ENCODE measurements at regions of chr1 and their contacts with region 1.

Region 1: DNA sequence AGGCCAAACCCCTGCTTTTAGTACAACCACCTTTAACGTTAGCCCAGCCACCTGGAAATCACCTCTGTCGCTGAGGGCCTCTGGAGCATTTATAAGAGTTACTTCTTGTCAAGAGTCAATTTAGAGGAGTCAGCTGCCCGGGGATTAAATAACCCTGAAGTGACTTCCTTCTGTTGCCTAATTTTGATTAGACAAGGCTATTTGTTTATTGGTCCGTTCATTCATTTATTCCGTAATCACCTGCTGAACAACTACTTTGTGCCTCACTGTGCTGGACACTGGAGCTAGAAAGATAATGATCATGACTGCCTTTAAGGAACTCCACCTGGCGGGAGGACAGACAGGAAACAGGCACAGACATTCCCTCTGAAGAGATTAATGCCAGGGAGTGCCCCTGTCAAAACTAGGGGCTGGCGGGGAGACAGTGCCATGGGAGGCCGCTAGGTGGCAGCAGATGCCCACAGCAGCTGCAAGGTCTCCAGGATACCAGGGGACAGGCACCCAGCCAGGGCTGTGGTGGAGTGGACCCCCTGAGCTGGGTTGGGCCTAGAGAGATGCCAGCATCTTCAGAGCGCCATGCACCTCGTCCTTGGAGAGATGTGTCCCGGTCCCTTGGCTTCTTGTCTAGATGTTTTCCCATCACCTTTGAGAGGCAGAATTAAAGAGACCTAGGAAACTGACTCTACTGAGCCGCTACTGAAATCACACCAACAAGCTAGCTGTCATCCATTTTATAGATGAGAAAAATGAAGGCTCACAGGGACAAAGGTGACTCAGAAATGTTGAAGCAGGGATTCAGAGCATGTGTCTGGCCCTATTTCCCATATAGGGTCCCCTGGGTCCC is 3.7 kb downstream of the REN start:
- DNase-seq: peak; percentile 77 to 85
- ATAC-seq: peak; percentile 89 to 98
- H3K4me3 ChIP-seq: no peak overlapping the region
- H3K27ac ChIP-seq: no peak overlapping the region
- H3K4me1 ChIP-seq: no peaks in the 10 kb centered on the region
- CTCF ChIP-seq: peak; percentile 98
- EP300 ChIP-seq: no peak
- POLR2A ChIP-seq: no peak
- RAD21 ChIP-seq: peak; percentile 97

Region 2: GRCh38 chr1:204018463-204018862 is 144.0 kb before region 1 on chr1:
- CTCF ChIA-PET with region 1: no interaction called
- POLR2A ChIA-PET with region 1: no interaction called
- DNase-seq: no peak
- ATAC-seq: no peak
- H3K4me3 ChIP-seq: no peak overlapping the region
- H3K27ac ChIP-seq: no peak overlapping the region
- H3K4me1 ChIP-seq: no peaks in the 10 kb centered on the region
- CTCF ChIP-seq: no peak
- EP300 ChIP-seq: no peak
- POLR2A ChIP-seq: no peak
- RAD21 ChIP-seq: no peak

Region 3: DNA sequence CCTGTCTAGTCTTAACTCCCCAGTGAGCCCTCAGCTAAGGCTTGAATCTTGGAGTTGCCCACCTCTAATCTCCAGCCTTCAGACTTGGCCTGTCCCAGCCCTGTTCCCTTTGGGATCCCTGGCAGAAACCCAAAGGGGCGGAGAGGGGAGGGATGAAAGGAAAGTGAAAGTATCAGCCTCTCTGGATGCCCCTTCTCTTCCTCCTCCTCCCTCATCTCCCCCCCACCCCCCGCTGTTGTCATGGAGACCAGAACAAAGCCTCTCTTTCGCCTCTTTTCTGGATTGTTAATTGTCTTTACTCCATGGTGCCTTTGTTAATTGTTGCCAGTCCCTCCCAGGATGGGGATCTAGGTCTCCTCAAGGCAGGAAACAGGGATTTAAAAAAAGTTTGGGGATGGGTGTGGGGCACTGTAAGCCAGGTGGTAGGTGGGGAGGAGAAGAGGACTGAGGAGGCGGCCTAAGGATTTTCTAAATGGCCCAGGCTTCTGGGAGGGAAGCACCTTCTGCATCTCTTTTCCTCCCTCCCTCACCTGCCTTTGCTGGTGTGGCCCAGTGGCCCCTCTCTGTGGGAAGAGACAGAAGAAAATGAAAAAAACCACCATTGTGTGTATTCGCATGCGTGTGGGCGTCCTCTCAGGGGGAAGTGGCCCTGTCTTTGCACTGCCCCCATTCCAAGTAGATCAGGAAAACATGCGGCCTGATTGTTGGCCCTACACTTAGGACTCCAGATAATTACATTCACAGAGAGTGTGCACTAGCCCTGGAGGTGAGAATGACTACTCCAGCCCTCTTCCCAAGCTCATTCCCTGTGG is 97.1 kb before region 1 on chr1:
- CTCF ChIA-PET with region 1: no interaction called
- POLR2A ChIA-PET with region 1: no interaction called
- DNase-seq: no peak
- ATAC-seq: no peak; a peak in 1 of 6 replicates
- H3K4me3 ChIP-seq: no peak overlapping the region
- H3K27ac ChIP-seq: no peak overlapping the region
- H3K4me1 ChIP-seq: no peaks in the 10 kb centered on the region
- CTCF ChIP-seq: no peak
- EP300 ChIP-seq: no peak
- POLR2A ChIP-seq: no peak
- RAD21 ChIP-seq: no peak

Region 4: DNA sequence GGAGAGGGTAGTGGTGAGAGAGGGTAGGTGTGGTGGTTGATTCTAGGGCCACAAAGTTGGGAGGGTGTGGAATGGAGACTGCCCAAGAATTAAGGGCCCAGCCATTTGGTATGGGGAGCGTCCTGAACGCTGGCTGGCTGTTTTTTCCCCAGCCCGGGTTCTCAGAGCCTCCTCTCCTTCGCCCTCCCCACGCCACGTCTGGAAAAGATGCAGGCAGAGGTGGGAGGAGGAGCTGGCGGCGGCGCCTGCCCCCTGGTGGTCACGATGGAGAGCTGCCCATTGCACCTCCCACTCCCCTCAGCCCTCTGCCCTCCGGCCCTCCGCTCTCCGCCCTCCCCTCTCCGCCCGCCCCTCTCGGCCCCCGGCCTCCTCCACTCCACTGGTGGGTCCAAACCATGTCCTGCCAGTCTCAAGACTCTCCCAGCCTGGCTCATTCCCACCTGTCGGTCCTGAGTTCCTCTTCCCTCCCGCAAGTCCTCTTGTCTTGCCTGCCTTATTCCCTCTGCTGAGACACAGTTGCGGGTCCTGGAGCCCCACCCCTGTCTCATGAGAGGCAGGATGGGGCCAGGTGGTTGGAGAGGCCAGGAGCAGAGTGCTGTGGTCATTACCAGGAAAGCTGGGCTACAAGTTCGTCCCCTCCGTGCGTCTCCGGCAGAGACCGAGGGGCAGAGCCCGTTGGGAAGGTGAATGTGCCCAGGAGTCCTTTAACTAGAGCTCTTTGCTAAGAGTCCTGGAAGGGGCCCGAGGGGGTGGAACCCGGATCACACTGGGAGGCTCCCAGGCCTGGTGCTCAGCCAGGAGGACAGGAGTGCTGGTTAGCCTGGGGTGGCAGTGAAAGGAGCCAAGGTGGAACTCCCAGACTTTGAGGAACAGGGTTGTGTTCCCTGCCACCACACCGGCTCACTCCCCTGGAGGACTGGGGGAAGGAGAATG is 33.2 kb before region 1 on chr1:
- CTCF ChIA-PET with region 1: interaction called, 23 read pairs
- POLR2A ChIA-PET with region 1: no interaction called
- DNase-seq: peak; percentile 62 to 94
- ATAC-seq: peak; percentile 78 to 91
- H3K4me3 ChIP-seq: peak overlapping the region; percentile 23; the same call in 2 of the 3 replicates
- H3K27ac ChIP-seq: peak overlapping the region; percentile 47 to 78; a peak in 5 of 6 replicates
- H3K4me1 ChIP-seq: peaks cover 31% of the 10 kb centered on the region
- CTCF ChIP-seq: peak; percentile 90
- EP300 ChIP-seq: no peak
- POLR2A ChIP-seq: no peak
- RAD21 ChIP-seq: peak; percentile 83 to 93

Region 5: DNA sequence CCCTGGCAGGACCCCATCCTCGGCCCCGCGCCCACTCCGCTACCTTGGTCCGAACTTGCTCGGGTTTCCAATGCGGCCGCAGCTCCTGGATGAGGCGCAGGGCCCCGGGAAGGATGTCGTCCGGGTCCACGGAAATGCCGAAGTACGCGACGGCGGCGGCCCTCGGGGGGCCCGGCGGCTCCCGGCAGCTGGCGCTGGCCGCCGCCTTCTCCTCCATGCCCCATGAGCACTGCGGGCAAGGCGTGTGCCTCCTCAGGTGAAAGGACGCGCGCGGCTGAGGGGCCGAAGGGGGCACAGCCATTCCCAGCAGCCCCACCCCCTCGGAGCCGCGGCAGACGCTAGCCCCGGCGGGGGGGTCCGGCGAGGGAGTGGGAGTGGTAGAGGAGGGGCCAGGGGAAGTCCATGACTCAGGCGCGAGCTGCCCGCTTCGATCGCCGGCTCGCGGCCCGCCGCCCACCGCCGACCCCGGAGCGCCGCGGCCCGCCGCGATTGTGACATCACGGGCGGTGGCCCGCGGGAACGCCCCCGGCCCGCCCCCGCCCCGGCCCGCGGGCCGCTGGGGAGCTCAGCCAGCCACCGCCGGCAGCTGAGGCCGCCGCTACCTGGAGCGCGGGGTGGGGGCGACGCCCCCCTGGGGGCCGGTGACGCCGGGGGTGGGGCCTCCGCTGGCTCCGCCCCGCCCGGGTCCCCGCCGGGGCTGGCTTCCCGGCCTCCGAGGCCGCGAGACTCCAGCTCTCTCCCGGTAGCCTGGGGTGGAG is 10.7 kb before region 1 on chr1 and contains the start of gene ETNK2:
- CTCF ChIA-PET with region 1: interaction called, 62 read pairs
- POLR2A ChIA-PET with region 1: no interaction called
- DNase-seq: peak; percentile 33 to 83
- ATAC-seq: peak; percentile 55 to 69
- H3K4me3 ChIP-seq: peak within 1 kb of the TSS; percentile 96
- H3K27ac ChIP-seq: peak within 1 kb of the TSS; percentile 78 to 85
- H3K4me1 ChIP-seq: peaks cover 16% of the 10 kb centered on the region
- CTCF ChIP-seq: no peak
- EP300 ChIP-seq: no peak
- POLR2A ChIP-seq: no peak; the same call in none of the 2 replicates
- RAD21 ChIP-seq: no peak
- polyA plus RNA-seq, gene ETNK2: 5.1 and 5.2 TPM in 2 replicates

Region 6: DNA sequence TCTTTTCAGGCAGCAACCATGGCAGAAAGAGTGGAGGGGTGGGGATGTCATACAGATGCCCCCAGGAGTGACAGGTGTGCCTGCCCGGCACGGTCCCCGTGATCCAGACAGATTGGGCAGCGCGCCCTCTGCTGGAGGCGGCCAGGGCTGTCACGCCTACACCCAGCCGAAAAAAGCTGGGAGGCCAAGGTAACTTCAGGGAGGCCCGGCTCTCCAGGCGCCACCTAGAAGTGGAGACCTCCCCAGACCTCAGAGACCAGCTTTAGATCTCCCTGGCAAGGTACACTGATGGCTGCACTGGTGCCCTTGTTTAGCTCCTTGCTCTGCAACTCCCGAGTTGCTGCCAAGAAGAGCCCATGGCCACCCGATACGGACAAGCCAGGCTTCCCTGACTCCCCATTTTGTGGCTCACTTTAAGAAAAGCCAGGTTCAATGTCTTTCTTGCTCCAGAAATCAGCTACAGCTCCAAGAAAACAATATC is 44.7 kb after region 1 on chr1:
- CTCF ChIA-PET with region 1: interaction called, 314 read pairs
- POLR2A ChIA-PET with region 1: no interaction called
- DNase-seq: peak; percentile 37 to 84
- ATAC-seq: peak; percentile 89 to 99
- H3K4me3 ChIP-seq: no peak overlapping the region
- H3K27ac ChIP-seq: no peak overlapping the region
- H3K4me1 ChIP-seq: peaks cover 2% of the 10 kb centered on the region; the same call in 1 of the 3 replicates
- CTCF ChIP-seq: peak; percentile 87
- EP300 ChIP-seq: no peak
- POLR2A ChIP-seq: no peak
- RAD21 ChIP-seq: peak; percentile 65 to 69

Region 7: GRCh38 chr1:204241050-204241449 is 78.6 kb after region 1 on chr1:
- CTCF ChIA-PET with region 1: interaction called, 16 read pairs
- POLR2A ChIA-PET with region 1: no interaction called
- DNase-seq: peak in 1 of 2 experiments; percentile 14
- ATAC-seq: peak; percentile 74 to 84
- H3K4me3 ChIP-seq: no peak overlapping the region
- H3K27ac ChIP-seq: no peak overlapping the region
- H3K4me1 ChIP-seq: no peaks in the 10 kb centered on the region
- CTCF ChIP-seq: no peak
- EP300 ChIP-seq: no peak
- POLR2A ChIP-seq: no peak
- RAD21 ChIP-seq: no peak

Region 8: DNA sequence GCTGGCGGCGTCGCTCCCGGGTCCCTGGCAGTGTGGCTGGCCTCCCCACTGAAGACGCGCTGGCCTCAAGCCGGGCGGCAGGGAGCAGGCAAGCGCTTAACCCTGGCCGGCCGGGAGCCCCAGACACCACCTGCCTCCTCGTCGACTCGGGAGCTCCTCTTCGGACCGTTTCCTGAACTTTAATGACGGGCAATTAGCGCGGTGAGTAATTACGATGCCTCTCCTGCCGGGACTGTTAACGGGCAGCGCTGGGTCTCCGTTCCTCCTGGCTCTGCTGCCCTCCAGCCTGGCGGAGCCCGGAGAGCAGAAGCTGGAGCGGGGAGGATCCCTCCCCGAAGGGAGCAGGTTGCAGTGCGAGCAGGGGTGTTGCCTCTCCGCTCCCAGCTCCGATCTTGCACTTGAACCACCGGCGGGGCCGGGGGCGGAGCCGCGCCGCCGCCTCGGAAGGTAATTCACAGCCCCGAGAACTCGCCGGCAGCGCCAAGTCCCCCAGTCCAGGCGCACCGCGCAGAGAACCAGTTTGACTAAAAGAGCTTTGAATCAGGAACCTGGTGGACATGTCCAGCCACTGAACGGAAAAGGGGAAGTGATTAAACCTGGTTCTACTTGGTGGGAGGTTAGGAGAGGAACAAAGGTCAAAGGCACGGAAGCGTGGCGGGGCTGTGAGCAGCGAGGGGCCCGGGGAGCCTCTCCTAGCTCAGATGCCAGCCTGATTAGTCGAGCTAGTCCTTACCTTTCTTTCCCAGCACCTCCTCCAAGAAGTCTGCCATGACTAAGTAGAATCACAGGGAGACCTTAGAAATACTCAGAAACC is 215.5 kb after region 1 on chr1:
- CTCF ChIA-PET with region 1: interaction called, 11 read pairs
- POLR2A ChIA-PET with region 1: no interaction called
- DNase-seq: peak; percentile 59 to 64
- ATAC-seq: peak; percentile 79 to 80
- H3K4me3 ChIP-seq: peak overlapping the region; percentile 76
- H3K27ac ChIP-seq: peak overlapping the region; percentile 94 to 95
- H3K4me1 ChIP-seq: peaks cover 33% of the 10 kb centered on the region
- CTCF ChIP-seq: no peak
- EP300 ChIP-seq: no peak
- POLR2A ChIP-seq: peak; percentile 42
- RAD21 ChIP-seq: no peak

Measured in A549 (cell line).